Activated CD4-positive, alpha-beta T cell treated with anti-CD3 and anti-CD28 coated beads, Interleukin-2, amount 10 ng/mL, durations not matched to agents 24 days and 14 days (primary cell): ENCODE measurements at regions of chr1 and their contacts with region 1.

Region 1: GRCh38 chr1:107807405-107807804 is 157.6 kb downstream of the VAV3 start:
- DNase-seq: no peak
- H3K4me3 Mint-ChIP-seq: no peak overlapping the region
- H3K27ac Mint-ChIP-seq: no peak overlapping the region
- H3K4me1 Mint-ChIP-seq: peaks cover 33% of the 10 kb centered on the region
- H3K27me3 Mint-ChIP-seq: peaks cover 2% of the 10 kb centered on the region

Region 2: GRCh38 chr1:107820805-107821204 is 13.4 kb after region 1 on chr1:
- intact Hi-C with region 1: loop called (anchors 2 kb)
- DNase-seq: no peak
- H3K4me3 Mint-ChIP-seq: no peak overlapping the region
- H3K27ac Mint-ChIP-seq: peak overlapping the region; percentile 80
- H3K4me1 Mint-ChIP-seq: peaks cover 14% of the 10 kb centered on the region
- H3K27me3 Mint-ChIP-seq: no peaks in the 10 kb centered on the region